B cell (primary cell): ENCODE measurements at regions of chr9 and their contacts with region 1.

Region 1: GRCh38 chr9:123702483-123702882 is 227.4 kb downstream of the DENND1A start:
- DNase-seq: no peak
- ATAC-seq: no peak
- H3K4me3 ChIP-seq: no peak overlapping the region
- H3K4me3 Mint-ChIP-seq: no peak overlapping the region
- H3K27ac ChIP-seq: no peak overlapping the region
- H3K27ac Mint-ChIP-seq: no peak overlapping the region
- H3K4me1 ChIP-seq: peaks cover 15% of the 10 kb centered on the region in 2 donors
- H3K4me1 Mint-ChIP-seq: peaks cover 23% of the 10 kb centered on the region
- H3K27me3 ChIP-seq: no peaks in the 10 kb centered on the region
- H3K27me3 Mint-ChIP-seq: no peaks in the 10 kb centered on the region
- CTCF ChIP-seq: no peak

Region 2: GRCh38 chr9:123678038-123678877 is 24.2 kb before region 1 on chr9:
- CTCF ChIA-PET with region 1: no interaction called
- POLR2A ChIA-PET with region 1: no interaction called
- intact Hi-C with region 1: no loop called
- DNase-seq: no peak
- ATAC-seq: no peak
- H3K4me3 ChIP-seq: peak overlapping the region in 1 of 5 experiments; percentile 53
- H3K4me3 Mint-ChIP-seq: peak overlapping the region; percentile 65
- H3K27ac ChIP-seq: no peak overlapping the region
- H3K27ac Mint-ChIP-seq: peak overlapping the region; percentile 91
- H3K4me1 ChIP-seq: peaks cover 18 to 34% of the 10 kb centered on the region in 2 donors
- H3K4me1 Mint-ChIP-seq: peaks cover 41% of the 10 kb centered on the region
- H3K27me3 ChIP-seq: no peaks in the 10 kb centered on the region
- H3K27me3 Mint-ChIP-seq: no peaks in the 10 kb centered on the region
- CTCF ChIP-seq: no peak

Region 3: DNA sequence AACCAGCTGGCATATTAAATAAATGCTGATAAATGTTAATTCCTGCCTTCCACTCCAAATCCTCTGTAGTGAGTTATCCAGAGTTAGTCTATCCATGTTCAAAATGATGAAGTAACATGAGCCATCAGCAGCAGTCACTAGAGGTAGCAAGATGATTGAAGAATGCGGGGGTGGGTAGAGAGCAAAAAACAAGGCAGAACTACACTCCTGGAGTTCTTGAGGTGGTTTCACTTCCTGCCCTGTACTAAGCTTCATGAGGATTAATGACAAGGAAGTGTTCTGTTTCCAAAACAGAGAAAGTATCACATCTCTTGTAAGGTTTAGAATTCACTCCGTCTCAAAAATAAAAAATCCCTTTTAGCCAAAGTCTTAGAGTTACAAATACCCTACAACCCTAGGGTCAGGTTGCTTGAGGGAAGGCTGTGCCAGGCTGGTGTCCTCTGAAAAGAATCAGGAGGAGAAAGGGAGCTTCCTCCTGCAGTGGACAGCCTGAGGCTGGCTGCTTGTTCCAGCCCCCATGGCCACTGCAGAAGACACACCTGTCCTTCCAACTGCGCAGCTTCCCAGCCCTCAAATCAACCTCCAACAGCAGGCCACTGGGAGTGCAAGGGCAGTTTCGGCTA is 47.2 kb after region 1 on chr9:
- CTCF ChIA-PET with region 1: no interaction called
- POLR2A ChIA-PET with region 1: no interaction called
- intact Hi-C with region 1: loop called (anchors 5 kb)
- DNase-seq: peak; percentile 63
- ATAC-seq: peak; percentile 76
- H3K4me3 ChIP-seq: no peak overlapping the region
- H3K4me3 Mint-ChIP-seq: no peak overlapping the region
- H3K27ac ChIP-seq: peak overlapping the region in 1 of 2 donors; percentile 16
- H3K27ac Mint-ChIP-seq: peak overlapping the region; percentile 10
- H3K4me1 ChIP-seq: peaks cover 12 to 14% of the 10 kb centered on the region in 2 donors
- H3K4me1 Mint-ChIP-seq: peaks cover 25% of the 10 kb centered on the region
- H3K27me3 ChIP-seq: no peaks in the 10 kb centered on the region
- H3K27me3 Mint-ChIP-seq: no peaks in the 10 kb centered on the region
- CTCF ChIP-seq: no peak